ENCODE measurements at regions of chr3 and their contacts with region 1.

Region 1: DNA sequence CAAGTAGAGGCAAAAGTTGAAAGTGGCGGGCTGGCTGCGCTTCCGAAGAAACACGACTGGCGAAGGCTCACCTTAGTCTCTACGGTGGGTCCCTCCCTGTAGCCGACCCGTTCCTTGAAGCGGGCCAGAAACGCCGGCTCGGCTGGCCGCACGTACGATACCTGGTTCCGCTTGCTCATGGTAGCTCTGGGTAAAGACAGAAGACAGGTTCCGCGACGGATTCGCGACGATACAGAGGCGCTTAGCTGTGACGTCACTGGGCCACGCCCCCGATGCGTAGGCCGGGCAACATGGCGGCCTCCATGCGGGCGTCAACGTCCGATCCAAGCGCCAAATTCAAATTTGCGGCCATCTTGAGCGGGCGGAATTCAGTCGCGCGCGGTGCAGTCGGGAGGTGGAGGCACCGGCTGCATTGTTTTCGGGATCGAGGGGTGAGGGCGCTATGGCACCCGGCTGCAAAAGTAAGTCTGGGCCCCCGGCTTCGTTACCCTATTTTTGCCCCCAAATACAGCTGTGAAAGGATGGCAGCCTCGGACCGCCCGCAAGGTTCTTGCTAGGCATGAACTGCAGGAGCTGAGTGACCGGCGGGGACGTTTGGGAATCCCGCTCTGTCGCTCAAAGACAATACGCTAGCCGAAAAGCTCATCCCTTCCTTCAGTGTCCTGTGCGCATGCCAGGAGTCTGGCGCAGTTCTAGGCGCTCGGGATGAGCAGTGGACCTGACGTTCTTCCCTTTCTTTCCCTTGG is at the starts of genes KIAA1143 and KIF15:
- DNase-seq: peak; percentile 96
- ATAC-seq: peak; percentile 96
- H3K4me3 Mint-ChIP-seq: peak within 1 kb of the TSS; percentile 89
- H3K27ac Mint-ChIP-seq: peak within 1 kb of the TSS; percentile 85
- H3K4me1 Mint-ChIP-seq: peaks cover 25% of the 10 kb centered on the region
- H3K27me3 Mint-ChIP-seq: no peaks in the 10 kb centered on the region
- CTCF ChIP-seq: no peak
- total RNA-seq, gene KIAA1143: 35.4 and 43.6 TPM in 2 replicates
- total RNA-seq, gene KIF15: 2.4 and 3.1 TPM in 2 replicates

Region 2: DNA sequence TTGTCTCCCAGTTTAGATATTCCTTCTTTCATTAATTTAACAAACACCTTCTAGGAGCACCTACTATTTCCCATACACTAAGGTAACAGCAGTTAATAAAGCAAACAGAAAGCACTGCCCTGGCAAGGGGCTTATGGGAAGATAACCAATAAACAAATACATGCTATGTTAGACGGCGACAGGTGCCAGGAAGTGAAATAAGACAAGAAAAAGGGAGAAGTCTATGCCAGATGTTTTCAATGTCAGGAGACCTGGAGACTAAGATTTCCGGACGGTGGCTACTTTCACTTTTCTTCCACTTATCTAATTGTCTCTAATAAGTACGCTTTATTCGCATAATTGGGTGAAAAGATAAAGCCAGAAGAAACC is 251.6 kb before region 1 on chr3:
- CTCF ChIA-PET with region 1: no interaction called
- POLR2A ChIA-PET with region 1: interaction called, 5 read pairs
- intact Hi-C with region 1: loop called (anchors 1 kb)
- DNase-seq: no peak
- ATAC-seq: peak; percentile 30
- H3K4me3 Mint-ChIP-seq: peak overlapping the region; percentile 95
- H3K27ac Mint-ChIP-seq: peak overlapping the region; percentile 92
- H3K4me1 Mint-ChIP-seq: peaks cover 40% of the 10 kb centered on the region
- H3K27me3 Mint-ChIP-seq: no peaks in the 10 kb centered on the region
- CTCF ChIP-seq: no peak

Region 3: DNA sequence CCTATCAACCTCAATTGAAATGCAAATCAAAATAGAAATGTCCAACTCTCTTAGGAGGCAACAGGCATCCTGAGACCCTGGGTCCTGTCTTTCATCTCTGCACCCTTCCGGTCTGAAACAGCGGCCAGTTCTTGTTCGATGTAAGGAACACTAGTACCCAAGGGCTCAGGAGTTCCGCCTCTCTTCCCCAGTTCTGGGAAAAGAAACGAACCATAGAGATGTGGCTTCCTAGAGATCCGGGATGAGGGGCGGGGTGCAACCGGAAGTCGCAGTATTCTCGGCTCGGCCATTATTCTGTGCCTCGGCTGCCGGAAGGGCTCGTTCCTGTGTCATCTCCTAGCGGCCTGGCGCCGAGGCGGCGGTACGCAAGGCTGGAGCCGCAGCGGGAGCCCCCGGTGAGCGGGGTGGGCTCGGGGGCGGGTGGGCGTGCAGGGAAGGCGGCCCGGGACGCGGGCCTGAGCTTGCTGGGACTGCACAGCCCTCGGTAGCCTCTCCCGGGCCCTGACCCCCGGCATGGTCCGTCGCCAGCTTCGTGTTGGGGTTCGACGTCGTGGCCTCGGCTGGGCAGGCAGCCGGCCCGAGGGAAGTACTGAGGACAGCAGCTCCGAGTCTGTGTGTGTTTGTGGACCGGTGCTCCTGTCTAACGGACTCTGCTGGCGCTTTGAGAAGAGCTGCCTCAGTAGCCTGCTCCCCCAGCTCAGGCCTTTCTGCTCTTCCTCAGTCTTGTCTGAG is 136.7 kb before region 1 on chr3 and contains the start of gene ZNF197:
- CTCF ChIA-PET with region 1: no interaction called
- POLR2A ChIA-PET with region 1: interaction called, 7 read pairs
- intact Hi-C with region 1: loop called (anchors 2 kb)
- DNase-seq: peak; percentile 51
- ATAC-seq: peak; percentile 90
- H3K4me3 Mint-ChIP-seq: peak within 1 kb of the TSS; percentile 90
- H3K27ac Mint-ChIP-seq: peak within 1 kb of the TSS; percentile 65
- H3K4me1 Mint-ChIP-seq: peaks cover 34% of the 10 kb centered on the region
- H3K27me3 Mint-ChIP-seq: no peaks in the 10 kb centered on the region
- CTCF ChIP-seq: no peak
- total RNA-seq, gene ZNF197: 15.8 and 16.9 TPM in 2 replicates

Region 4: GRCh38 chr3:44712455-44713075 is 49.0 kb before region 1 on chr3 and contains the start of gene ZNF502:
- CTCF ChIA-PET with region 1: no interaction called
- POLR2A ChIA-PET with region 1: interaction called, 14 read pairs
- intact Hi-C with region 1: loop called (anchors 1 kb)
- DNase-seq: peak; percentile 48
- ATAC-seq: peak; percentile 93
- H3K4me3 Mint-ChIP-seq: peak within 1 kb of the TSS; percentile 90
- H3K27ac Mint-ChIP-seq: peak within 1 kb of the TSS; percentile 50
- H3K4me1 Mint-ChIP-seq: peaks cover 13% of the 10 kb centered on the region
- H3K27me3 Mint-ChIP-seq: peaks cover 21% of the 10 kb centered on the region
- CTCF ChIP-seq: no peak
- total RNA-seq, gene ZNF502: 5.0 and 6.5 TPM in 2 replicates

Region 5: DNA sequence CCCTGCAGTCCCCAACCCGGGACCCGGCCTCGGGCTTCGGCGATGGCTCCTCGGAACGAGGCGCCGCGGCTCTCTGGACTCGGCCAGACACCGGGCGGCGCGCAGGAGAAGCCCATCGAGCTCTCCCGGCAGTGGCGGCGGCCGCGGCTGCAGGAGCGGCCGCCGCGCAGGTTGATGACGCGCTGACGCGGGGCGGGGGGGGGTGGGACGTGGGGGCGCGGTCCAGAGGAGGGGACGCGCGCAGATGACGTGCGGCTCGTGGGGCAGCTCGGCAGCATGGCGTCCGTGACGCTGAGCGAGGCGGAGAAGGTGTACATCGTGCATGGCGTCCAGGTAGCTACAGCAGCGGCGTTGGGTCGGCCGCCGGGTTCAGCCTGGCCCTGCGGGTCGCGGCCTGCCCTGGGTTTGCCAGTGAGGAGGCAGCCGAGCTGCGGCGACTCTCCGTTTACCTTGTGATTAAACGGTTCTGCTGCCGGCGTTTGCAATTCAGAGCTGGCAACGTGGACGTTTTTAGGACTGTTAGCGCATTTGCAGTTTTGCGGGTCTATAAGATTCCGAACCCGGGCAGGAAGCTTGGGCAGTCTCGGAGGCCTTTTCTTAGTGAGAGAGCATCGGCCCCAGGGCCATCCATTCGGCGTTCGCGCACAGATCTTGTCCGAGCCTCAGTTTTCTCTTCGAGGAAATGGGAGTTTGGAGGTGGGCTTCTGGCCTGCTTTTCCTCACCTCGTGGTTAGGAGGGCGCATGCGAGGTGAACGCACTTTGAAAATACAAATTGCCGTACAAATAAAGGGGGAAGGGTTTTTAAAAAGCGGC is 214.6 kb after region 1 on chr3 and contains the starts of genes EXOSC7 and ZDHHC3:
- CTCF ChIA-PET with region 1: interaction called, 3 read pairs
- POLR2A ChIA-PET with region 1: interaction called, 15 read pairs
- intact Hi-C with region 1: loop called (anchors 1 kb)
- DNase-seq: peak; percentile 76
- ATAC-seq: peak; percentile 94
- H3K4me3 Mint-ChIP-seq: peak within 1 kb of the TSS; percentile 93
- H3K27ac Mint-ChIP-seq: peak within 1 kb of the TSS; percentile 88
- H3K4me1 Mint-ChIP-seq: peaks cover 49% of the 10 kb centered on the region
- H3K27me3 Mint-ChIP-seq: no peaks in the 10 kb centered on the region
- CTCF ChIP-seq: no peak
- total RNA-seq, gene EXOSC7: 42.5 and 44.0 TPM in 2 replicates
- total RNA-seq, gene ZDHHC3: 38.5 and 43.4 TPM in 2 replicates

Measured in activated B cell treated with CpG ODN at 0.5 μM for 24 hours (primary cell).